Vagina (tissue), 2 donors: ENCODE measurements at regions of chr17 and their contacts with region 1.

Region 1: GRCh38 chr17:66747578-66748275 is 87.2 kb upstream of the CACNG5 start:
- DNase-seq: no peak
- H3K4me3 ChIP-seq: no peak overlapping the region
- H3K27ac ChIP-seq: no peak overlapping the region
- H3K4me1 ChIP-seq: no peaks in the 10 kb centered on the region
- H3K27me3 ChIP-seq: no peaks in the 10 kb centered on the region
- CTCF ChIP-seq: no peak
- POLR2A ChIP-seq: no peak

Region 2: DNA sequence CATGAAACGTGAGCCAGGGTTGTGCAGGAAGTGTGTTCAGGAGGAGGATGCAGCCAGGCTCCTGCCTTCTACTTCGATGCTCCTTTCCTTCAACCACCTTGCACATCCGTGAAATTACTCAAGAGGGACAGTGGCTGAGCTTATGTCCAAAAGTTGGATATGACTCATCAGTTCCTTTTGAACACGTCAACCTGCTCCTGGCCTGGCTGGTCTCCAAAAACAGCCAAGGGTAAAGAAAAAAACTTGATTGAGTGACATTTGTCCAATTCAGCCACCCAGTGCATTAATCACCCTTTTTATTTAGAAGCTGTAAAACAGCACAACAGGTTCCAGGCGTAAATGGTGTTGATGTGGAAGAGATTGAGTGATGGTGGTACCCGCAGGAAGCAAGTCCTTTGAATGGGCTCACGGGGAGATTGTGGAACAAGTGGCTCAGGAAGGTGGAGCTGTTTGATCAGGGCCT is 86.3 kb before region 1 on chr17:
- intact Hi-C with region 1: no loop called
- DNase-seq: no peak
- H3K4me3 ChIP-seq: no peak overlapping the region
- H3K27ac ChIP-seq: no peak overlapping the region
- H3K4me1 ChIP-seq: peaks cover under 1% of the 10 kb centered on the region
- H3K27me3 ChIP-seq: no peaks in the 10 kb centered on the region
- CTCF ChIP-seq: no peak
- POLR2A ChIP-seq: no peak

Region 3: GRCh38 chr17:67615011-67615561 is 867.4 kb after region 1 on chr17:
- intact Hi-C with region 1: loop called (anchors 10 kb)
- DNase-seq: no peak
- H3K4me3 ChIP-seq: no peak overlapping the region
- H3K27ac ChIP-seq: no peak overlapping the region
- H3K4me1 ChIP-seq: peaks cover 14% of the 10 kb centered on the region
- H3K27me3 ChIP-seq: no peaks in the 10 kb centered on the region
- CTCF ChIP-seq: no peak
- POLR2A ChIP-seq: no peak